Activated CD4-positive, alpha-beta T cell treated with anti-CD3 and anti-CD28 coated beads, Interleukin-2, amount 10 ng/mL, durations not matched to agents 7 days and 5 days (primary cell): ENCODE measurements at regions of chr19 and their contacts with region 1.

Region 1: GRCh38 chr19:4329858-4330257 is 8.8 kb downstream of the STAP2 start:
- DNase-seq: no peak
- H3K4me3 Mint-ChIP-seq: peak overlapping the region; percentile 47
- H3K27ac Mint-ChIP-seq: peak overlapping the region; percentile 22
- H3K4me1 Mint-ChIP-seq: peaks cover 27% of the 10 kb centered on the region
- H3K27me3 Mint-ChIP-seq: peaks cover 6% of the 10 kb centered on the region

Region 2: DNA sequence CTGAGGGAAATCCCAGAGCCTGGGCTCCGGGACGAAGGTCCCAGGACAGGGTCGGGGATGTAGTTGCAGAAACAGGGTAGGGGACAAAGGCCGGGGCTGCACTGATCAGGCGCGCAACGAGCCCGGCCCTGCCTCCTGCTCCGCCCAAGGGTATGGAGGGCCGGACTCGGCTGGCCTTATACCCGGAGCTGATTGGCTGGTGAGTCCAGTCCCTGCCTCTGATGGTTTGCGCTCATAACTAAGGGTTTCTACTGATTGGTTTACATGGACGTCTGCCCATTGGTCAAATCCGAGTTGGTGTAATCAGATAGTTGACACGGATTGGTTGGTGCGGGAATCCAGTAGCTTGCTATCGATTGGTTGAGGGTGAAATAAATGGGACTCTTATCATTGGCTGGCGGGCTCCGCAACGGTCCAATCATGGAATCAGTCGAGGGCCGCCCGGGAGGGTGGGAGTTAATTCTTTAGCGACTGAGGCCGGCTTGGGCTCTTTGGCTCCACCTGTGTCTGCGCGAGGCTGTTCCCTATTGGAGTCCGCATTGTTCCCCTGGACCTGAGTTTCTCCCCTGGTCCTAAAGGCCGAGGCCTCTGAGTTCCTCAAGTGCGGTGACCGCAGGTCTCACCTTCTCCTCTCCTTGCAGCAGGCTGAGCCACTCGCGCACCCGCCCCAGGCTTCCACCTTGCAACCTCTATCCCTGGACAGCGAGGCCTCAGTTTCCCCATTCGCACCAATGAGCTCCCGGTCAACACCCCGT is 12.9 kb after region 1 on chr19:
- CTCF ChIA-PET with region 1: interaction called, 16 read pairs
- POLR2A ChIA-PET with region 1: interaction called, 6 read pairs
- DNase-seq: peak; percentile 98
- H3K4me3 Mint-ChIP-seq: peak overlapping the region; percentile 91
- H3K27ac Mint-ChIP-seq: peak overlapping the region; percentile 97
- H3K4me1 Mint-ChIP-seq: peaks cover 38% of the 10 kb centered on the region
- H3K27me3 Mint-ChIP-seq: no peaks in the 10 kb centered on the region

Region 3: GRCh38 chr19:4369888-4370260 is 40.0 kb after region 1 on chr19:
- CTCF ChIA-PET with region 1: no interaction called
- POLR2A ChIA-PET with region 1: no interaction called
- DNase-seq: peak; percentile 77
- H3K4me3 Mint-ChIP-seq: peak overlapping the region; percentile 62
- H3K27ac Mint-ChIP-seq: peak overlapping the region; percentile 93
- H3K4me1 Mint-ChIP-seq: peaks cover 68% of the 10 kb centered on the region
- H3K27me3 Mint-ChIP-seq: no peaks in the 10 kb centered on the region

Region 4: DNA sequence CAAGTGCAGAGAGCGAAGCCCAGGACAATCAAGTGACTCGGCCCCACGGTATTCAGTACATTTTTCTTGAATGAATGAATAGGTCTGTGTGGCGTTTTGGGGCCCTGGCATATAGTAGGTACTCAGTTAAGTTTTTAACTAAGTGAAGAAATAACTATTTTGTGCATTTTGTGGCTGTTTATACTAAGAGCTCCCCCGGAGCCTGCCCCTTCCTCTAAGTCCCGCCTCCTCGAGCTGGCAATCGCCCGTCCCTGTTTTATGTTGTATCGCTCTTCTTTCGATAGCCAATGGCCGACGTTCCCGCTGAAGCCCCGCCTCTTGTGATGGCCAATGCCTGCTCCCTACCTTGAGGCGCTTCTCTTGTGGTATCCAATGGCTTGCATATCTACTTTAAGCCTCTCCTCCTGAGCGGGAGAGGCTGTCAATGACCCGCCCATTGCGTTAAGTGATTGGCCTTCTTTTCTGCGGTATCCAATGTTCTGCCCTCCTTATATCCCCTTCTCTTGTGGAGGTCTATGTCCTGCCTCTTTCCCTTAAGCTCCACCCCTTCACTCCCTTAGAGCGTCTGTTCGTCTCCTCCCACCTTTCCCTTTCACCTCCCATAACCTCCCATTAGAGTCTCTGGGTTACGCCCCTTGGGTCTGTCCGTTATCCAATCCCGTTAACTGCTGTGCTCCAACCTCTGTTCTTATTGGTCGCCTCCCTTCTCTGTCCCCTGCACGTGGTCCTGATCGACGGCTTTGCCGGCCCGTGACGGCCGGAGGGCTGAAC is 141.7 kb after region 1 on chr19:
- CTCF ChIA-PET with region 1: no interaction called
- POLR2A ChIA-PET with region 1: no interaction called
- DNase-seq: peak; percentile 99
- H3K4me3 Mint-ChIP-seq: no peak overlapping the region
- H3K27ac Mint-ChIP-seq: no peak overlapping the region
- H3K4me1 Mint-ChIP-seq: peaks cover 23% of the 10 kb centered on the region
- H3K27me3 Mint-ChIP-seq: no peaks in the 10 kb centered on the region